T-cell (primary cell): ENCODE measurements at regions of chr17 and their contacts with region 1.

Region 1: GRCh38 chr17:43068570-43069367 is 43.7 kb downstream of the RND2 start:
- DNase-seq: no peak
- ATAC-seq: no peak
- H3K4me3 ChIP-seq: no peak overlapping the region
- H3K4me3 Mint-ChIP-seq: no peak overlapping the region
- H3K27ac ChIP-seq: no peak overlapping the region
- H3K27ac Mint-ChIP-seq: no peak overlapping the region
- H3K4me1 ChIP-seq: no peaks in the 10 kb centered on the region
- H3K4me1 Mint-ChIP-seq: no peaks in the 10 kb centered on the region
- H3K27me3 ChIP-seq: no peaks in the 10 kb centered on the region
- H3K27me3 Mint-ChIP-seq: no peaks in the 10 kb centered on the region

Region 2: DNA sequence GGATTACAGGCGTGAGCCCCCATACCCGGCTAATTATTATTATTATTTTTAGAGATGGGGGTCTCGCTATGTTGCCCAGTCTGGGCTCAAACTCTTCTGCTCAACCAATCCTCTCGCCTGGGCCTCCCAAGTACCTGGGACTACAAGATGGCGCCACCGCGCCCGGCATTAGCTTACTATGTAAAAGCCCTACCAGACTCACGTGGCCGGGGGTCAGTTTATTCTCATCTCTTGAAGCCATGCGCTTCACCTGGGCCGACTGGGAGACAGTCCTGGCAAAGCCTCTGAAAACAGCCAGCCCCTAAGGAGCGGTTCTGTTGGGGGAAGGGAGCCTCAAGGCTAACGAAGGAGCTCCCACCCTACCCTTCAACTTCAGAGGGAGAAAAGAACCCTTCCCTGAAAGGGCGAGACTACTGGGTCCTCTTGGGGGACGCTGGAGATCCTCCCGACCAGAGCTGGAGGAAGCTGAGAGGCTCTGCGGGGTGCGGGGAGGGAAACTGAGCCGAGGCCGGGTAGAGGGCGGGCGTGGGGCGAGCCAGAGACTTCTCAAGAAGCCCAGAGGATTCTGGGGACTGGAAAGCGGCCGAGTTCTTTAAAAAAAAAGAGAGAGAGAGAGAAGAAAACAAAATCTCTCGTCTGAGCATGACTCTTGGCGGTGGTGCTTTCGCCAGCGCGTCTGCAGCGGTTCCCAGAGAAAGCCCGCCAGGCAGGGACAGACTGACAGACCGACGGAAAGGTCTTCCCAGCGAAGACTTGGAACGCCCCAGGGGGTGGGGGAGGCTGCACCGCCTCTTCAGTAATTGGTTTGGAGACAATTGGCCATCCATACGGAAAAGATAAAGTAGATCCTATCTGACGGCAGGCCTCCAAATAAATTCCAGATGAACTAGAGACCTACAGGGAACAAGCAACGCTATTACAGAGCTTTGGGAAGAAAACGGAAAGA is 415.3 kb before region 1 on chr17:
- CTCF ChIA-PET with region 1: no interaction called
- POLR2A ChIA-PET with region 1: no interaction called
- DNase-seq: no peak
- ATAC-seq: no peak
- H3K4me3 ChIP-seq: peak overlapping the region in 1 of 2 donors; percentile 3
- H3K4me3 Mint-ChIP-seq: no peak overlapping the region
- H3K27ac ChIP-seq: no peak overlapping the region
- H3K27ac Mint-ChIP-seq: no peak overlapping the region
- H3K4me1 ChIP-seq: peaks cover 0 to 7% of the 10 kb centered on the region in 2 experiments
- H3K4me1 Mint-ChIP-seq: peaks cover 5 to 12% (median 11%) of the 10 kb centered on the region in 3 donors
- H3K27me3 ChIP-seq: peaks cover 2 to 26% of the 10 kb centered on the region in 2 experiments
- H3K27me3 Mint-ChIP-seq: peaks cover 12 to 16% of the 10 kb centered on the region in 2 donors

Region 3: DNA sequence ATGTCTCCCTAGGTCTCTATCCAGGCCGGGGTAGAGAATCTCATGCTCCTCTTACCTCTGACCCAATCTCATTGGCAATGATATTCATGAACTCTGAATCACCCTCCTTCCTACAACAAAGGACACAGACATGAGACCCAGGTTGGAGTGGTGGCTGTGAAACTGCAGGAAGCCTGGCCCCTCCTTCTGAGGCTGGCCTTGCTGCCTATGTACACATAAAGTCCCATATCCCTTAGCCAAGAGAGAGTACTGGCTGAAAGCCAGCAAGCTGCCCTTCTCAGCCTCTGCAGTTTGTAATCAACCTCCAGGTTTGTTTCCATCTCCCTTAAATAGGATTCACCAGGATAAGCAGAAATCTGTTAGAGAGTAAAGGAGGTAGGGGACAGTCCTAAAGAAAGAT is 115.1 kb before region 1 on chr17:
- CTCF ChIA-PET with region 1: no interaction called
- POLR2A ChIA-PET with region 1: interaction called in 1 of 2 experiments, 10 read pairs
- DNase-seq: no peak
- ATAC-seq: no peak
- H3K4me3 ChIP-seq: no peak overlapping the region
- H3K4me3 Mint-ChIP-seq: no peak overlapping the region
- H3K27ac ChIP-seq: no peak overlapping the region
- H3K27ac Mint-ChIP-seq: no peak overlapping the region
- H3K4me1 ChIP-seq: no peaks in the 10 kb centered on the region
- H3K4me1 Mint-ChIP-seq: peaks cover 0 to 5% (median 0%) of the 10 kb centered on the region in 3 donors
- H3K27me3 ChIP-seq: no peaks in the 10 kb centered on the region
- H3K27me3 Mint-ChIP-seq: no peaks in the 10 kb centered on the region